ENCODE measurements at regions of chr1 and their contacts with region 1.

Region 1: DNA sequence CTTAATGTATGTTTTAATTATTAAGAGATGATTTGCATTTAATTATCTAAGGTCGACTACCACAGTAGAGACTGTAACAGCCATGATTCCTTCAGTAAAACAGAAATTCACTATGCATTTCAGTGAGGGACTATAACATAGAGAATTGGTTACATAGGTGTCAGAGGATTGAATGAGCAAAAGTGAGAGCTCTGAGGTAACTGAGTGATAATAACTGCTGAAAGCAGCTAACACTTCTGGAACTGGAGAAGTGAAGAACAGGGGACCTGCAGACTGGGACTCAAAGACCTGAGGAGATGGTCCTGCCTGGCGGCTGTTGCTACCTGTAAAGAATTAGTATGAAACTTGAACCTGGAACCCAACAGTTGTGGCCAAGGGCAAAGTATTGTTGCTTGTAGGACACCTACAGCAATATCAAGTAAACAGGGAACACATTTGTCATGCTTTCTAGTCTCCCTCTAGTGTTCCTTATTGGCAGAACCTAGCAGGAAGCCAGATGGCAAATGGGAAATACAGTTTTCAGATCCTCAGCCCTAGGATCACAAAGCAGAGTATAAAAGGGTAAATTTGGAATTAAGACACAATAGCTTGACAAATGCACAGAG is 110.6 kb downstream of the HS2ST1 start:
- DNase-seq: peak; percentile 30
- H3K4me3 ChIP-seq: no peak overlapping the region
- H3K27ac ChIP-seq: no peak overlapping the region
- H3K4me1 ChIP-seq: no peaks in the 10 kb centered on the region
- H3K27me3 ChIP-seq: no peaks in the 10 kb centered on the region
- CTCF ChIP-seq: peak; percentile 58 to 69

Region 2: GRCh38 chr1:86965012-86965826 is 59.8 kb before region 1 on chr1:
- CTCF ChIA-PET with region 1: no interaction called
- dilution Hi-C with region 1: no loop called
- in situ Hi-C with region 1: no loop called
- intact Hi-C with region 1: loop called (anchors 2 kb)
- DNase-seq: peak; percentile 11
- H3K4me3 ChIP-seq: no peak overlapping the region
- H3K27ac ChIP-seq: no peak overlapping the region
- H3K4me1 ChIP-seq: no peaks in the 10 kb centered on the region
- H3K27me3 ChIP-seq: no peaks in the 10 kb centered on the region
- CTCF ChIP-seq: peak; percentile 65 to 70

Region 3: GRCh38 chr1:87115317-87115890 is 90.4 kb after region 1 on chr1:
- CTCF ChIA-PET with region 1: no interaction called
- dilution Hi-C with region 1: no loop called
- in situ Hi-C with region 1: no loop called
- intact Hi-C with region 1: no loop called
- DNase-seq: peak; percentile 65
- H3K4me3 ChIP-seq: no peak overlapping the region
- H3K27ac ChIP-seq: no peak overlapping the region
- H3K4me1 ChIP-seq: peaks cover 31% of the 10 kb centered on the region
- H3K27me3 ChIP-seq: no peaks in the 10 kb centered on the region
- CTCF ChIP-seq: no peak